Dorsolateral prefrontal cortex (tissue), 120 donors: ENCODE measurements at regions of chr12 and their contacts with region 1.

Region 1: GRCh38 chr12:31589904-31590641 is 863 bp downstream of the DENND5B start:
- DNase-seq: peak; percentile 50 to 77 (median 65)
- H3K4me3 ChIP-seq: peak overlapping the region; percentile 63 to 96 (median 87)
- H3K27ac ChIP-seq: peak overlapping the region; percentile 85 to 98 (median 96)
- H3K27me3 ChIP-seq: no peaks in the 10 kb centered on the region
- CTCF ChIP-seq: peak in 21 of 56 donors; percentile 3 to 50 (median 16)

Region 2: GRCh38 chr12:30643366-30643765 is 946.7 kb before region 1 on chr12:
- intact Hi-C with region 1: no loop called
- DNase-seq: no peak
- H3K4me3 ChIP-seq: no peak overlapping the region
- H3K27ac ChIP-seq: no peak overlapping the region
- H3K27me3 ChIP-seq: no peaks in the 10 kb centered on the region
- CTCF ChIP-seq: no peak

Region 3: GRCh38 chr12:31325877-31326631 is 264.0 kb before region 1 on chr12 and contains the start of gene SINHCAF:
- intact Hi-C with region 1: loop called (anchors 2 kb)
- DNase-seq: peak; percentile 95 to 99 (median 98)
- H3K4me3 ChIP-seq: peak within 1 kb of the TSS; percentile 34 to 89 (median 73)
- H3K27ac ChIP-seq: peak within 1 kb of the TSS in 53 of 59 donors; percentile 18 to 86 (median 68)
- H3K27me3 ChIP-seq: peaks cover 0 to 34% (median 9%) of the 10 kb centered on the region in 45 donors
- CTCF ChIP-seq: peak in 20 of 56 donors; percentile 9 to 56 (median 28)
- total RNA-seq, gene SINHCAF: 0.70 to 9.0 (median 3.2) TPM

Region 4: GRCh38 chr12:31406345-31406744 is 183.7 kb before region 1 on chr12:
- intact Hi-C with region 1: loop called (anchors 5 kb)
- DNase-seq: no peak
- H3K4me3 ChIP-seq: no peak overlapping the region
- H3K27ac ChIP-seq: peak overlapping the region in 1 of 59 donors; percentile 13
- H3K27me3 ChIP-seq: no peaks in the 10 kb centered on the region
- CTCF ChIP-seq: no peak

Region 5: DNA sequence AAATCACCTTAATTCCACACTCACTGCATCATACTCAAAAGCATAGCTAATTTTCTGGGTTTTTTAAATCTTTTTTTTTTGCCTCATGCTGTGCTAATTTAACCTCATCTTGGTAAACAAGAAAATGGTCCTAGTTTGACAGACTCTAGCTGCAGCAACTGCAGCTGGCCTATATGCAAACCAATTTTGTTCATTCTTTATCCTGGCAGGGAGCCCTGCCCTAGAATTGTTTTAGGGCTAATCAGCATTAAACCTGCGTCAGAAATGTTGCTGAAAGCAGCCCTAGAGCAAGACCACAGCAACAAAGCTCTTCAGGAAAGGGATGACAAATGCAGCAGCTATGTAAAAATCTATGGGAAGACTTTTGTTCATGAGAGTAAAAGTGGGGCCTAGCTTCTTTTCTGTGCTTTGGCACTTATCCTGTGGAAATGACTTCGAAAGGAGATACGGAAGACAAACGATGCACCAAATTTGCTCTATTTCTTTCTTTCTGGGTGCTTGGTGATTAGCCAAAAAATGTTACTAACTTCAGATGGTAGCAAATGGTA is 71.3 kb before region 1 on chr12:
- intact Hi-C with region 1: loop called in 1 of 2 experiments (anchors 10 kb)
- DNase-seq: peak in 3 of 10 donors; percentile 19 to 35 (median 35)
- H3K4me3 ChIP-seq: peak overlapping the region in 4 of 59 donors; percentile 2 to 13 (median 8)
- H3K27ac ChIP-seq: peak overlapping the region in 52 of 59 donors; percentile 3 to 72 (median 44)
- H3K27me3 ChIP-seq: no peaks in the 10 kb centered on the region
- CTCF ChIP-seq: no peak

Region 6: GRCh38 chr12:31631784-31632183 is 41.7 kb after region 1 on chr12:
- intact Hi-C with region 1: loop called (anchors 2 kb)
- DNase-seq: no peak
- H3K4me3 ChIP-seq: no peak overlapping the region
- H3K27ac ChIP-seq: no peak overlapping the region
- H3K27me3 ChIP-seq: no peaks in the 10 kb centered on the region
- CTCF ChIP-seq: no peak

Region 7: GRCh38 chr12:31728917-31729640 is 139.0 kb after region 1 on chr12 and contains the start of gene AMN1:
- intact Hi-C with region 1: loop called in 1 of 2 experiments (anchors 5 kb)
- DNase-seq: peak; percentile 98 to 99 (median 99)
- H3K4me3 ChIP-seq: peak within 1 kb of the TSS; percentile 65 to 97 (median 80)
- H3K27ac ChIP-seq: peak within 1 kb of the TSS; percentile 78 to 98 (median 93)
- H3K27me3 ChIP-seq: no peaks in the 10 kb centered on the region
- CTCF ChIP-seq: peak in 45 of 56 donors; percentile 6 to 60 (median 37)
- total RNA-seq, gene AMN1: 29.1 to 65.1 (median 46.0) TPM

Region 8: DNA sequence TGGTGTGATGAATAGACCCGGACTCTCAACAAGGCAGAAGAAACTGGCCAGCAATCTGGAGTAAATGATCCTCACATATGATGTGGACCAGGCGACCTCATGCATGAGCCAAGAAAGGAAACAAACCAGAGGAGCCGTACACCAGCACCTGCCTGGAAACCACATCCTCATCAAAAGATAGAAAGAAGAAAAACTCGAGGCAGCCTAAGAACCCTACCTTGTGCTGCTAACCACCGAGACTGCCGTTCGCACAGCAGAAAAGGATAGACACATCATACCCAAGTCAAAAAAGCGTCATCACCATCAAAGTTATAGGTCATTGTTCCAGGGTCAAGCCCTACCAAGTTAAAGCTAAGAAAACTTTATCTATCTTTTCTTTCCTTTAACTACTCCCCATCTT is 435.8 kb after region 1 on chr12:
- intact Hi-C with region 1: no loop called
- DNase-seq: no peak
- H3K4me3 ChIP-seq: no peak overlapping the region
- H3K27ac ChIP-seq: no peak overlapping the region
- H3K27me3 ChIP-seq: no peaks in the 10 kb centered on the region
- CTCF ChIP-seq: no peak